ENCODE measurements at regions of chr6 and their contacts with region 1.

Region 1: GRCh38 chr6:44074439-44075136 is 52.7 kb downstream of the MRPL14 start:
- DNase-seq: peak; percentile 80 to 94 (median 84)
- ATAC-seq: peak; percentile 79
- H3K4me3 ChIP-seq: peak overlapping the region; percentile 22; the same call in 1 of the 2 replicates
- H3K27ac ChIP-seq: peak overlapping the region; percentile 80
- H3K4me1 ChIP-seq: peaks cover 53 to 70% of the 10 kb centered on the region in 2 experiments; a peak in 4 of 5 replicates
- H3K27me3 ChIP-seq: no peaks in the 10 kb centered on the region
- CTCF ChIP-seq: peak; percentile 93 to 99 (median 94)
- EP300 ChIP-seq: peak; percentile 36
- POLR2A ChIP-seq: no peak
- RAD21 ChIP-seq: peak; percentile 94 to 95

Region 2: GRCh38 chr6:43263314-43264178 is 811.0 kb before region 1 on chr6:
- CTCF ChIA-PET with region 1: no interaction called
- POLR2A ChIA-PET with region 1: no interaction called
- in situ Hi-C with region 1: no loop called
- intact Hi-C with region 1: loop called (anchors 10 kb)
- DNase-seq: peak; percentile 79 to 89 (median 83)
- ATAC-seq: peak; percentile 94
- H3K4me3 ChIP-seq: no peak overlapping the region
- H3K27ac ChIP-seq: no peak overlapping the region
- H3K4me1 ChIP-seq: peaks cover 16 to 40% of the 10 kb centered on the region in 2 experiments
- H3K27me3 ChIP-seq: peaks cover 5 to 15% of the 10 kb centered on the region in 2 experiments; a peak in 3 of 5 replicates
- CTCF ChIP-seq: peak; percentile 94 to 98 (median 96)
- EP300 ChIP-seq: no peak
- POLR2A ChIP-seq: no peak
- RAD21 ChIP-seq: peak; percentile 94 to 97

Region 3: DNA sequence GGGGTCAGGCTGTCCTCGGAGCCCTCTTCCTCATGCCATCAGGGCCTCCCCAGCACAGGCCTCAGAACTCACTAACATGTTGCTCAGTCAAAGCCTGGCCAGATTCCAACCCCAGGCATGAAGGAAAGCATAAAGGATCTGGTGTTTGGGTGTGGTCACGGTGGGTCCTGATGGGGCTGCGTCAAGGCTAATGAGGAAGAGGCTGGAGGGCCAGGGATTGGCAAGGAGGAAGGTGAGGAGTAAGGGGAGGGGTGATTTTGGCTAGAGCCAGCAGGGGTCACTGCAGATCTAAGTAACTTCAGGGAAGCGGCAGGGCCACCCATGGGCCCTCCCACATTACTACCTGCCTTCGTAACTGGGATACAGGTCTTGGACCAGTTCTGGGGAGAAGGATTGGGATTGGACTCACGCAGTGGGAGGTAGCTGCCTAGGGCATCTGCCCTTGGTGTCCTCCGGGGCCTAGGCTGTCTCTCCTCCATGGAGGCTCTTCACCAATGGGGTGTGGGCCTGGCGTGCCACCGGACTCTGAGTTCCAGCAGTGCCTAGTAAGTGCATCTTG is 350.8 kb before region 1 on chr6:
- CTCF ChIA-PET with region 1: interaction called, 30 read pairs
- POLR2A ChIA-PET with region 1: interaction called, 6 read pairs
- in situ Hi-C with region 1: loop called (anchors 5 kb)
- intact Hi-C with region 1: loop called (anchors 1 kb)
- DNase-seq: peak; percentile 91 to 94 (median 93)
- ATAC-seq: peak; percentile 87
- H3K4me3 ChIP-seq: no peak overlapping the region
- H3K27ac ChIP-seq: peak overlapping the region; percentile 68; the same call in 1 of the 3 replicates
- H3K4me1 ChIP-seq: peaks cover 25 to 31% of the 10 kb centered on the region in 2 experiments
- H3K27me3 ChIP-seq: no peaks in the 10 kb centered on the region; a peak in 1 of 5 replicates
- CTCF ChIP-seq: peak; percentile 91 to 98 (median 97)
- EP300 ChIP-seq: 0 out of 2 replicates have a peak, but pooled peaks have one; percentile 2
- POLR2A ChIP-seq: no peak
- RAD21 ChIP-seq: peak; percentile 93 to 97

Region 4: DNA sequence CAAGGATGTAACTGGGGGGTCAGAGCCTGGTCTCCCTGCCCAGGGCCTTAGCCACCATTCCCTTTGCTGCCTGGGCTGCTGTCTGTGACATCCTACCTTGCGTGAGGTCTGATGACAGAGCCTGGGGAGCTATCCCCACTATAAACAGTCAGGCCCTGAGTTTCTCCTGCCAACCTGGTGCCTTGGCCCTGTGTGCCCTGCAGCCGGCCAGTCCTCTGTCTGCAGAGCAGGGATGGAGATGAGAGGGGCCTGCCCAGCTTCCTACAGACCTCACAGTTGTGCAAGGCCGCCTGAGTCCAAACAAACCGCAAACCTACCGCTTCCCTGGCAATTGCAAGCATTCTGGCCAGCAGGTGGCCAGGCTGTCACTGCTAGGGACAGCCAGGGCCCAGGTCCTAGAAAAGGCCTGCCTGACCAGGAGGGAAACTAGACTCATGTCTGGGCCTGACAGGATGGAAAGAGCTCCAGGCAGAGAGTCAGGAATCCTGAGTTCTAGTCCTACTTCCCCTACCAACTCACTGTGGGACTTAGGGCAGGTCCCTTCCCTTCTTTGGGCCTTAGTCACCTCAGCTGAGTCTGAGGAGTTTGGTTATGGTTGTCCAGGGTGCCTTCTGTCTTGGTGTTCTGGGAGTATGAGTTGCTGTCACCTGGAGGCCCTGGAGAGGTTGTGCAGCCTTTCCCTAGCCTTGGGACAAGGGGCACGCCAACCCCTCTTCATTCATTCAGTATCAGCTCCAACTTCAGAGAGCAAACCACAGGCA is 218.4 kb before region 1 on chr6:
- CTCF ChIA-PET with region 1: interaction called, 3 read pairs
- POLR2A ChIA-PET with region 1: interaction called, 5 read pairs
- in situ Hi-C with region 1: no loop called
- intact Hi-C with region 1: loop called (anchors 5 kb)
- DNase-seq: peak; percentile 66 to 80 (median 72)
- ATAC-seq: peak; percentile 92
- H3K4me3 ChIP-seq: no peak overlapping the region
- H3K27ac ChIP-seq: no peak overlapping the region; the same call in 2 of the 3 replicates
- H3K4me1 ChIP-seq: peaks cover 6 to 8% of the 10 kb centered on the region in 2 experiments; a peak in 3 of 5 replicates
- H3K27me3 ChIP-seq: no peaks in the 10 kb centered on the region
- CTCF ChIP-seq: peak; percentile 83 to 89 (median 84)
- EP300 ChIP-seq: 0 out of 2 replicates have a peak, but pooled peaks have one; percentile 19
- POLR2A ChIP-seq: no peak
- RAD21 ChIP-seq: peak; percentile 89 to 92

Region 5: DNA sequence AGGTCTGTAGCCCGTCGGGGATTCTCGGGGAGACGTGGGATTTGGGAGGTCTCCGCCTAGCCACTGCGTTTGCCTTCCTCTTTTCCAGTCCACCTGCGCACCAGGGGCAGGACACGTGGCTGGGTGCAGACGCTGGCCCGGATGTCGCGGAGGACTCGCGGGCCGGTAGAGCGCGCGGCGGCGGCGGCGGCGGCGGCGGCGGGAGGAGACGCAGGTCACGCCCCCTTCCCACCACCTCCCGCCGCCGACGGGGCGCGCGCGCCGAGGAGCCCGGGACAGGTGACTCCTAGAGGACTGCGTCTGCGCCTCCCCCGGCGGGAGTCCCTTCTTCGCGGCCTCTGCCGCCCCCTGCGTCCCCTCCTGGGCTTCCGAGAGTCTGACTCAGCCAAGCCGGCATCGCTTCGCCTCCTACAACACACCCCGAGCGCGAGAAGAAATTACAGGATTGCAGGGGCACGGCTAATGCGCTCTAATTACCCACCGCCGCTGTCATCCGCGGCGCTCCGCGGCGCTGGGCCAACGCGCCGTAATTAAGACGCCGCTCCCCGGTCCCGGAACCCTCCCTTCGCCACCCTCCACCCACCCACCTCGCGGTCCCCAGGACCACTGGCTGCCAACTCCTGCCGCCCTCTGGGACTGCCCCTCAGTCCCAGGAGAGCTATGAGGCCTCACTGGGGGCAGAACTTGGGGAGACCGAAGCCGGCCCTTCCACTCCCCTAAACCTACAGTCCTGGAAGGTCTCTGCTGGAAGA is 71.8 kb before region 1 on chr6:
- CTCF ChIA-PET with region 1: interaction called, 3 read pairs
- POLR2A ChIA-PET with region 1: no interaction called
- in situ Hi-C with region 1: no loop called
- intact Hi-C with region 1: loop called (anchors 5 kb)
- DNase-seq: no peak
- ATAC-seq: no peak
- H3K4me3 ChIP-seq: no peak overlapping the region
- H3K27ac ChIP-seq: no peak overlapping the region
- H3K4me1 ChIP-seq: peaks cover 27 to 31% of the 10 kb centered on the region in 2 experiments
- H3K27me3 ChIP-seq: no peaks in the 10 kb centered on the region
- CTCF ChIP-seq: no peak
- EP300 ChIP-seq: no peak
- POLR2A ChIP-seq: no peak
- RAD21 ChIP-seq: no peak

Region 6: GRCh38 chr6:44096612-44097011 is 22.0 kb after region 1 on chr6:
- CTCF ChIA-PET with region 1: no interaction called
- POLR2A ChIA-PET with region 1: no interaction called
- in situ Hi-C with region 1: no loop called
- intact Hi-C with region 1: no loop called
- DNase-seq: peak; percentile 56 to 73 (median 64)
- ATAC-seq: peak; percentile 84
- H3K4me3 ChIP-seq: no peak overlapping the region
- H3K27ac ChIP-seq: no peak overlapping the region
- H3K4me1 ChIP-seq: peaks cover 0 to 4% of the 10 kb centered on the region in 2 experiments; a peak in 3 of 5 replicates
- H3K27me3 ChIP-seq: no peaks in the 10 kb centered on the region
- CTCF ChIP-seq: peak; percentile 81 to 82 (median 81)
- EP300 ChIP-seq: no peak
- POLR2A ChIP-seq: no peak
- RAD21 ChIP-seq: peak; percentile 64 to 75

Measured in K562 (cell line).